Naive thymus-derived CD4-positive, alpha-beta T cell (primary cell): ENCODE measurements at regions of chr13 and their contacts with region 1.

Region 1: GRCh38 chr13:77150651-77151050 is 123.7 kb upstream of the FBXL3 start:
- DNase-seq: no peak
- ATAC-seq: no peak
- H3K4me3 ChIP-seq: no peak overlapping the region
- H3K4me3 Mint-ChIP-seq: no peak overlapping the region
- H3K27ac ChIP-seq: no peak overlapping the region
- H3K27ac Mint-ChIP-seq: peak overlapping the region in 1 of 9 donors; percentile 24
- H3K4me1 ChIP-seq: no peaks in the 10 kb centered on the region
- H3K4me1 Mint-ChIP-seq: peaks cover 0 to 4% (median 0%) of the 10 kb centered on the region in 7 donors
- H3K27me3 ChIP-seq: no peaks in the 10 kb centered on the region
- H3K27me3 Mint-ChIP-seq: no peaks in the 10 kb centered on the region

Region 2: DNA sequence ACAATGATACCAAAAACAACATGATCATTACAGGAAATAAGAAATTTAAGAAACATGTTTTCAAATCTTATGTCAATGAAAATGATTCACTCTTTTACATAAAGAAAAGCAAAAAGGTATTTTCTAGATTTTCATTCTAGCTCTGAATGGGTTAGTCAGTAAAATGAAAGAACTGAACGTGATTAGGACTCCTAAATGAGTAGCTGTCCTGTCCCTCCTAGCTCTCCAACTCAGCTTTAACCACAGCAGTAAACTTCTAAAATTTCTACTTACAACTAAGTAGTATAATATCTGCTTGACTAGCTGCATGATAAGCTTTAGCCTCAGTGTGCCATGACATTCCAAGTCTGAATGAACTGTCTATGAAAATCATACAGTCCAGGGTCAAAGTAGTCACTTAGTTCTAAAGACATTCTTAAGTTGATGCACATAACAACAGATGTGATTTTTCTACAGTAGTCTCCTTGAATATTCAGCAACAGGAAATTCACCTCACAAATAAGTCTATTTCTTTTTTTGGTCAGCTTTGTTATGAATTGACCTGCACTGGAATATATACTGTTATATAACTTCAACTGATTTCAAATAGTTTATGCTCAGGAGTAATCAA is 39.8 kb after region 1 on chr13:
- CTCF ChIA-PET with region 1: no interaction called
- POLR2A ChIA-PET with region 1: no interaction called
- intact Hi-C with region 1: loop called in 1 of 2 experiments (anchors 5 kb)
- DNase-seq: no peak
- ATAC-seq: no peak
- H3K4me3 ChIP-seq: no peak overlapping the region
- H3K4me3 Mint-ChIP-seq: no peak overlapping the region
- H3K27ac ChIP-seq: no peak overlapping the region
- H3K27ac Mint-ChIP-seq: peak overlapping the region in 4 of 9 donors; percentile 4 to 49 (median 20)
- H3K4me1 ChIP-seq: no peaks in the 10 kb centered on the region
- H3K4me1 Mint-ChIP-seq: peaks cover 4 to 20% (median 11%) of the 10 kb centered on the region in 7 donors
- H3K27me3 ChIP-seq: no peaks in the 10 kb centered on the region
- H3K27me3 Mint-ChIP-seq: no peaks in the 10 kb centered on the region